ENCODE measurements at regions of chr12 and their contacts with region 1.

Region 1: GRCh38 chr12:9634177-9634803 is 26.6 kb upstream of the KLRB1 start:
- DNase-seq: no peak
- ATAC-seq: no peak

Region 2: GRCh38 chr12:9673404-9674225 is 39.3 kb after region 1 on chr12:
- intact Hi-C with region 1: no loop called
- DNase-seq: peak; percentile 68
- ATAC-seq: peak; percentile 95

Region 3: DNA sequence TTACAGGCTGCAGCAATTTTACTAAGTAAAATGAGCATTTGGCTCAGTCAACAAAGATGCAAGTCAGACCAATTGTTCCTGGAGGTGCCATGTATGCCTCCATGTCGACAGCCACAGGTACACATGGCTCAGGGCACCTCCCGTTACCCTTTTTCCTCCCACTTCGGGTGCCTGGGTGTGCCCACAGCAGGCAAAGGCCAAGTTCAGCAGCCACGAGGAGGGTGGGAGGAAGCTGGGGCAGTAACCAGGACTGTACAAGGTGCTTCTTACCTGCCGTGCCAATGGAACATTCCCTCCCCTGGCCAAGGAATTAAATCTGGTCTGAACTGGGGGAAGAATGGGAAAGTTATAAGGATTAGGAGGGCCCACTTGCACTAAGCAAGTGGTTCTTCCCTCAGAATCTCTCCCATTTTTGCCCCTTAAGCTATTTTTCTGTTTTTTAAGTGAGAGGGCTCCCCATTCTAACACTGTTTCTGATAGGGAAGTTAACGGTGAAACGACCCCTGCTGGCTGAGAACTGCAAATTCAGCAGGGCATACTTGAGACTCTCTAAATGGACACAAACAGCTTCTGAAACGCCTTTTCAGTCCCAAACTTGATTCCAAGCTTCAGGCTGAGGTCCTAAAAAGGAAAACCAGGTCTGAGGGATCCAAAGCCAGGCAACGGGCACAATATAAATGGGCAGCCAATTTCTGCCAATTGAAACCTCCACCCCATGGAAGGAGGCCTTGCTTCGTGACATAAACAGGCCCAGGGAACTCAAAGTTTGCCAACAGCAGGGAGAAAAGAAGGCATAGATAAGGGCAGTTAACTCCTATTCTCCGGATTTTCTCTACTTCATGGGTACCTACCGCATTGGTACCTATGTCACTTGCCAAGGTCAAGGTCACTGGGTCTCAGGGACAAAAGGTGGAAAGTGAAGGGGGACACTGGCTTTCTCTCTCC is 73.8 kb after region 1 on chr12:
- intact Hi-C with region 1: loop called (anchors 5 kb)
- DNase-seq: no peak
- ATAC-seq: peak; percentile 63